ENCODE measurements at regions of chr2 and their contacts with region 1.

Region 1: GRCh38 chr2:216792222-216793021 is 67.4 kb downstream of the TNP1 start:
- DNase-seq: peak; percentile 86 to 90
- ATAC-seq: peak; percentile 90
- H3K4me3 ChIP-seq: no peak overlapping the region
- H3K27ac ChIP-seq: peak overlapping the region; percentile 73 to 98
- H3K4me1 ChIP-seq: peaks cover 0 to 6% of the 10 kb centered on the region in 2 donors
- H3K27me3 ChIP-seq: no peaks in the 10 kb centered on the region

Region 2: GRCh38 chr2:216713691-216714336 is 78.6 kb before region 1 on chr2:
- intact Hi-C with region 1: loop called in 1 of 2 experiments (anchors 5 kb)
- DNase-seq: peak; percentile 85 to 86
- ATAC-seq: peak; percentile 52
- H3K4me3 ChIP-seq: no peak overlapping the region
- H3K27ac ChIP-seq: peak overlapping the region in 1 of 2 donors; percentile 58
- H3K4me1 ChIP-seq: peaks cover 0 to 5% of the 10 kb centered on the region in 2 donors
- H3K27me3 ChIP-seq: no peaks in the 10 kb centered on the region

Region 3: GRCh38 chr2:216829533-216829932 is 37.1 kb after region 1 on chr2:
- intact Hi-C with region 1: loop called in 1 of 2 experiments (anchors 5 kb)
- DNase-seq: peak; percentile 91 to 93
- ATAC-seq: peak; percentile 87
- H3K4me3 ChIP-seq: no peak overlapping the region
- H3K27ac ChIP-seq: no peak overlapping the region
- H3K4me1 ChIP-seq: no peaks in the 10 kb centered on the region
- H3K27me3 ChIP-seq: no peaks in the 10 kb centered on the region

Region 4: DNA sequence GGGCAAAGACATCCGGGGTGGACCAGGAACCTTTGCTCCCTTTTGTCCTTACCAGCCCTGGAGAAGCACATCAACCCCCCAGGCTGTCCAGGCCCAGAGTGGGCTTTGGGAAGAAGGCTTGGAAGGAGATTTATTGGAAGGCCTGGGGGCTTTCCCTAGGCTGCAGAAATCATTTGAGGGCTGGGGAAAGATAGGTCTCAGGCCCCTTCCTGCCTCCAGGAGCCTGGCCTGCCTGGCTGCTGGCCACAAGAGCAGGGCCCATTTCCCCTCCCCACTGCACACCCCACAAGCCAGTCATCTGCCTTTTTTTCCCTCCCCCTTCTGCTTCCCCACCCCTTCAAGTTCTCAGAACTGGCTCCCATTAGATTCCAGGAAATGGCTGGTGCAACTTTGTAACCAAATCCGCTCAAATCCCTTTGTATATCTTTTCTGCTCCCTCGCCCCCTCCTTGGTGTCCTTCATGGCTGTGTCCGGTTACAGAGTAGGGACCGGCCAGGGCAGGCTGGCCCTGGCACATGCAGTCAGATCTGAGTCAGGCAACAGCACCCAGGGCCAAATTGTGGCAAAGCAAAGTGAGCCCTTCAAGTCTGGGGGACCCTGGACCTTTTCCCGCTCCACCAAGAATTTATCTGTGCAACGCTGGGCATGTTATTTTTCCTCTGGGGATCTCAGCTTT is 88.2 kb after region 1 on chr2:
- intact Hi-C with region 1: loop called in 1 of 2 experiments (anchors 10 kb)
- DNase-seq: peak in 1 of 2 donors; percentile 78
- ATAC-seq: peak; percentile 73
- H3K4me3 ChIP-seq: no peak overlapping the region
- H3K27ac ChIP-seq: no peak overlapping the region
- H3K4me1 ChIP-seq: no peaks in the 10 kb centered on the region
- H3K27me3 ChIP-seq: no peaks in the 10 kb centered on the region

Region 5: GRCh38 chr2:217033199-217033598 is 240.8 kb after region 1 on chr2:
- intact Hi-C with region 1: no loop called
- DNase-seq: no peak
- ATAC-seq: no peak
- H3K4me3 ChIP-seq: no peak overlapping the region
- H3K27ac ChIP-seq: no peak overlapping the region
- H3K4me1 ChIP-seq: no peaks in the 10 kb centered on the region
- H3K27me3 ChIP-seq: no peaks in the 10 kb centered on the region